ENCODE measurements at regions of chr21 and their contacts with region 1.

Region 1: DNA sequence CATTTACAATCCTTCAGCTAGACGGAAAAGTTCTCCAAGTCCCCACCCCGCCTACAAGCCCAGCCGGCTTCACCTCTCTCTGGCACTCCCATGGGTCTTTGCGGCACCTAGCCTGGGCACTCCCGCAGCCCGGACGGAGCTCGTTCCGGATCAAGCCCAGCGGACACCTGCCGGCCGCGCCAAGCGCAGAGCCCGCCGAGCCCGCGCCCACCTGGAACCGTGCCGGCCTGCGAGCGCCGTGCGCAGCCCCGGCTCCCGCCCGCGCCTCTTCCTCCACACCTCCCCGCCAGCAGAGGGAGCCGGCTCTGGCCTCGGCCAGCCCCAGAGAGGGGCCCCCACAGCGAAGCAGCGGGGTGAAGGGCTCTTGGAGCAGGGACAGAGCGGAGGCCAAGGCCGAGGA is 50.0 kb upstream of the KRTAP19-8 start:
- DNase-seq: no peak
- ATAC-seq: no peak

Region 2: GRCh38 chr21:30340441-30341241 is 747.7 kb before region 1 on chr21:
- intact Hi-C with region 1: loop called (anchors 10 kb)
- DNase-seq: peak; percentile 39
- ATAC-seq: no peak

Region 3: DNA sequence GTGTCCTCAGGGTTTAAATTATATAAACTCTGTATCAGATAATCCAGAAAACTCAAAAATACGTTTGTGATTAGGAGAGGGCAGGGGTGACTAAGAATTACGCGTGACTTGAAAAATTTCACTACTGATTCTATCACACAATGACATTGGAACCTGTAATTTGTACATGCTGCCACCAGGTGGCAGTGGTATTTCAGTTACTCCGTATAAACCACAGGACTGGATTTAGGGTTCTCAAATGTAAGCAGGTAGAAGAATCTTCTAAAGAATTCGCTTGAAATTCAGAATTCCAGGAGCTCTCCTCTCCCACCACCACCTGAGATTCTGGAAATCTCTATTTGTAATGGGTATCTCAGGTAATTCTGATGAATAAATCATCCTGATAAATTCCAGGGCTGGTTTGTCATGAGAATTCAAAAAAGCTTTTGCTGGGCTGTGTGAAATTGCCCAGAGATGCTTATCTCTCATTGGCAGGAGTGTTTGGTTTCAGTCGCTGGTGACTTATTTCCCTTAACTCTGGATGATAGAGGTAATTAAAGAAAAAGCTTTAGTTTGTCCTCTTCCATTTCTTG is 257.0 kb before region 1 on chr21:
- intact Hi-C with region 1: loop called (anchors 5 kb)
- DNase-seq: no peak
- ATAC-seq: no peak

Region 4: GRCh38 chr21:31374395-31374794 is 286.1 kb after region 1 on chr21:
- intact Hi-C with region 1: no loop called
- DNase-seq: no peak
- ATAC-seq: no peak